Activated T-helper 2 cell treated with anti-CD3 and anti-CD28 coated beads, Interferon-gamma antibody, Interleukin-2, Interleukin-4, amounts not matched to agents 10 μg/mL and 5 μg/mL and 100 μg/mL, durations not matched to agents 14 hours and 24 hours and 36 hours (primary cell): ENCODE measurements at regions of chr11 and their contacts with region 1.

Region 1: DNA sequence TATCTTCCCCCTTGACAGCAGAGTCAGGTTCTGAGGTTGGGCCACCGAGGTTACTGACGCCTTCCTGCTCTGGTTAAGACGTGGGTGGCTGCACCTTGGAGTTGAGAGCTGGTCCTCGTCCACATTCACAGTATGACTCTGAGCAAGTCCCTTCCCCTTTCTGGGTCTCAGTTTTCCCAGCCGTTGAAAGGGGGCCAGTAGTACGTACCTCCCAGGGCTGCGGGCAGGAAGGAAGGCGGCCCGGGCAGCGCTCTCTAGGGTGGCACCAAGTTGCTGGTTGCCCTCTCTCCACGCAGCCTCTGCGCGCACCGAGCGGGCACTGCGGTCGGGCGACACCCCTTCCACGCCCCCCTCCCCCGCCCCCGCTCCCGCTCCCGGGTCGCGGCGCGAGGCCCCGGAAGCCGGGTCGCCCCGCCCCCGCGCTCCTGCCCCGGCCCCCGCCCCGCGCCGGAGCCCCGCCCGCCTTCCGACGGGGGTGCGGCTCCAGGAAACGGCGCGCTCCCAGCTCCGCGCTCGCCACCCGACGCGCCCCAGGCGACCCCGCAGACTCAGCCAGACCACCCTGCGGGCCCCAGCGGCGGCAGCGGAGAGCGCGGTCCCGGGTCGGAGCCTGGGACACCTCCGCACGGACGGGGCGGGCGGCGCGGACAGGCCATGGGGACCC is at the start of gene EHBP1L1:
- DNase-seq: peak; percentile 76
- H3K4me3 Mint-ChIP-seq: peak within 1 kb of the TSS; percentile 91
- H3K27ac Mint-ChIP-seq: peak within 1 kb of the TSS; percentile 95
- H3K4me1 Mint-ChIP-seq: peaks cover 46% of the 10 kb centered on the region
- H3K27me3 Mint-ChIP-seq: no peaks in the 10 kb centered on the region
- total RNA-seq, gene EHBP1L1: 163 and 168 TPM in 2 replicates

Region 2: DNA sequence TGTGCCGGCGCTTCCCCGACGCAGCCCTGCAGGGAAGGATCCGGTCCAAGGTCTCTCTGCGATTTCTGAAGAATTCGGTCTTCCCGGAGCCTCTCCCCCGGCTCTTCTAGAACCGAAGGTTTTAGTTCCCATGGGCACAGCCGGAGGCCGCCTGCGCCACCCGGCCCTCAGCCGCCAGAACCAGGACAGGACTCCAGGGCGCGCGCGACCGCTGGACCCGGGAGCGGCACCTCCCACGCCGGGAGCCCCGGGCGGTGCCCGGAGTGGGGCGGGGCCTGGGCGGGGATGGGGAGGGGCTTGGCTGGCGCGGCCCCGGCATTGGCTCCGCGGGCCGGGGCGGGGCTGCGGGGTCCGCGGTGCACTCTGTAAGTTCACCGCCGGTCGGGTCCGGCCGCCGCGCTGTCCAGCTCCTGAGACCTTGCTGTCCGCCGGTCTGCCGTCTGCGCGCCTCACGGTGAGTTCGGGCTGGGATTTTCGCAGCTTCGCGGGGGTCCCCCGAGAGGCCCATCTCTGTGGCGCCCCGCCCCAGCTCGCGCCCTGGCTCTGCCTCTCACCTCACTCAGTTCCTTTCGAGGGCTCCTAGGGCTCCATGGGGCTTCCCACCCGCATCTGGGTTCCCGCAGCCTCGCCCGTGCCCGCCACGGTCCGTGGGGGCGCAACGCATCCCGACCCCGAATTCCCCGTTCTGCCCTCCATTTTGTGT is 261.0 kb before region 1 on chr11 and contains the start of gene CDC42EP2:
- intact Hi-C with region 1: no loop called
- DNase-seq: peak; percentile 69
- H3K4me3 Mint-ChIP-seq: peak within 1 kb of the TSS; percentile 80
- H3K27ac Mint-ChIP-seq: no peak within 1 kb of the TSS
- H3K4me1 Mint-ChIP-seq: peaks cover 9% of the 10 kb centered on the region
- H3K27me3 Mint-ChIP-seq: no peaks in the 10 kb centered on the region
- total RNA-seq, gene CDC42EP2: 3.4 and 5.1 TPM in 2 replicates

Region 3: DNA sequence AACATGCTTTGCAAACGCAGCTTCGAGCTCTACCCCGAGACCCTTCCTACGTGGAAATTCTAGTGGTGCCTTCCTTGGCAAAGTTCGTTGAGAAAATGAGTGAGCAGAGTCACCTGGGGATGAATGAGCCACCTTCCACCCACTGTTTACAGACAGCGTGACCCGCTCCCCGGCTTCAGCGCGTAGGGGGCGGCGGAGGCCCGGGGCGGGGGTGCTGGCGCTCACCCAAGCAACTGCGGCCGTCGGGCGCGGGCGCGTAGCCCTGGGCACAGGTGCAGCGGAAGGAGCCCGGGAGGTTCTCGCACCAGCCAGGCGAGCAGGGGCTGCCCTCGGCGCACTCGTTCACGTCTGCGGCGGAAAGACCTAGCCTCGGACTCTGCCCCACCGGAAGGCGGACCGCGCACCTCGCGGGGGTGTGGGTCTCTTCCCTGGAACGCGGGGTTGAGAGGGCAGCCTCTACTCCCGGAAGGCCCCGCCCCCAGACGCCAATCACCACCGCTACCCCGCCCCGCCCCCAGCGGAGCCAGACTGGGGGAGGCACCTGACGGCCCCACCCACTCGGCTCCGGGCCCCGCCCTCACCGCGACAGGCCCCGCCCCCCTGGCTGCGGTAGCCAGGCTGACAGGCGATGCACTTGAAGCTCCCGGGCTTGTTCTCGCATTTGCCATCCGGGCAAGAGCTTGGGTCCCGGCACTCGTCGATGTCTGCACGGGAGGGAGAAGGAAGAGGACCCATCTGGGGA is 29.3 kb before region 1 on chr11:
- intact Hi-C with region 1: loop called (anchors 1 kb)
- DNase-seq: peak; percentile 97
- H3K4me3 Mint-ChIP-seq: peak overlapping the region; percentile 76
- H3K27ac Mint-ChIP-seq: peak overlapping the region; percentile 81
- H3K4me1 Mint-ChIP-seq: peaks cover 35% of the 10 kb centered on the region
- H3K27me3 Mint-ChIP-seq: no peaks in the 10 kb centered on the region